ENCODE measurements at regions of chr15 and their contacts with region 1.

Region 1: DNA sequence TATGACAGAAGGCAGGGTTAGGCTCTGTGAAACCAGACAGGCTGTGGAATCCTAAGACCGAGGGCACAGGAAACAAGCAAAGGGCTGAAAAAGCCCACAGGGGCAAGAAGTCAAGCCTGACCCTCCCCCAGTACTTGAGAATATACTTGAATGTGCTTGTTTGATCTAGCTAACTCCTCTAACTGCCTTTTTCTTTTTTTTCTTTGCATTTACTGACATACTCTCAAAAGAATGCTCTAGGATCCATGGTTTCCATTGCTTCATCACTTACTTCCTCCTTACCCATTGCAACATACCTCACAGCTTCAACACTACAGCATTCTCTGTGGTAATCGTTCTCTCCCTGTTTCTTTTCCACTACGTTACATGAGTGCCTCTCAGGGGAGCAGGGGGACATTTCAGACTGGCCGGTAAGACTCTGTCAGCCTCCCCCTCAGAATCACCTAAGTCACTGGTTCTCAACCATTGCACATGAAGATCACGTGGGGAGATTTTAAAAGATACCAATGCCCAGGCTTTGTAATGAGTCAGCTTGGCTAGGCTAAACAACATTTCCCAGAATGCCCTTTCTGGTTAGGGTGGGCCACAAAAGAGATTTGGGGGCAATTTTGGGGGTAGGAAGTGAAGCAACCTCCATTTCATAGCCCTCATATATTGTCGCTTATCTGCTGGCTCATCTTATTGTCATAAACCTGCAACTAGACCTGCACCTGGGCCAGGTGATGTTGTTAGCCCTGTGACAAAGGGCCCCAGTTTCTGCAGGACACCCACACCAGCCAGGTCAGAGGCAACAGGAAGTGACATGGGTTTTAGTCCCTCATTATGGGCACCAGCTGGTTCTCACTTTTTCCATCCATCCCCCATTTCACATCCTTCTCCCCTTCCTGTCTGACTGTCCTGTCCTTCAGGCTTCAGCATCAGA is 24.6 kb upstream of the RSL24D1 start:
- DNase-seq: no peak
- H3K4me3 ChIP-seq: no peak overlapping the region
- H3K27ac ChIP-seq: peak overlapping the region; percentile 83 to 95
- H3K4me1 ChIP-seq: no peaks in the 10 kb centered on the region
- H3K27me3 ChIP-seq: no peaks in the 10 kb centered on the region
- CTCF ChIP-seq: no peak
- POLR2A ChIP-seq: no peak

Region 2: DNA sequence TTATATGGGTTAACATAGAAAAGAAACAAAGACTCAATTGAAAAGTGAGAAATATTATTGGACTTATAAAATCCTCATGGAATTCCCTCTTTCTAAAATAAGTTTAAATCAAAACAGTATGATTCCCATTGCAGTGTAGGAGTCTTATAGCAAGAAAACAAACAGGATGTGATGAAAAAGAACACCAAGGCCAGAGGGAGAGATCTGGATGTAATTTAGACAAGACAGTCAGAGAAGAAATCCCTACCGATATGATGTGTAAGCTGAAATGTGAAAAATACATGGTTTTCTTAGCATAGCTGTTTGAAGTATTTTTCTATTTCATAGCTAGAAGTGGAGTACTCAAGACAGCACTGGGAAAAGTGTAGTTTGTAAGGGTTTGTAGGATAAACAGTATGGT is 546.1 kb before region 1 on chr15:
- intact Hi-C with region 1: no loop called
- DNase-seq: no peak
- H3K4me3 ChIP-seq: no peak overlapping the region
- H3K27ac ChIP-seq: no peak overlapping the region
- H3K4me1 ChIP-seq: no peaks in the 10 kb centered on the region
- H3K27me3 ChIP-seq: no peaks in the 10 kb centered on the region
- CTCF ChIP-seq: no peak
- POLR2A ChIP-seq: no peak

Region 3: GRCh38 chr15:55289721-55290527 is 68.6 kb after region 1 on chr15 and contains the start of gene RAB27A:
- intact Hi-C with region 1: loop called (anchors 10 kb)
- DNase-seq: peak; percentile 57 to 72
- H3K4me3 ChIP-seq: peak within 1 kb of the TSS; percentile 88 to 94 (median 89)
- H3K27ac ChIP-seq: peak within 1 kb of the TSS; percentile 96 to 98
- H3K4me1 ChIP-seq: no peaks in the 10 kb centered on the region
- H3K27me3 ChIP-seq: no peaks in the 10 kb centered on the region
- CTCF ChIP-seq: no peak
- POLR2A ChIP-seq: no peak
- total RNA-seq, gene RAB27A: 7.4 to 21.3 (median 18.3) TPM